Gastrocnemius medialis (tissue), 4 donors: ENCODE measurements at regions of chr6 and their contacts with region 1.

Region 1: DNA sequence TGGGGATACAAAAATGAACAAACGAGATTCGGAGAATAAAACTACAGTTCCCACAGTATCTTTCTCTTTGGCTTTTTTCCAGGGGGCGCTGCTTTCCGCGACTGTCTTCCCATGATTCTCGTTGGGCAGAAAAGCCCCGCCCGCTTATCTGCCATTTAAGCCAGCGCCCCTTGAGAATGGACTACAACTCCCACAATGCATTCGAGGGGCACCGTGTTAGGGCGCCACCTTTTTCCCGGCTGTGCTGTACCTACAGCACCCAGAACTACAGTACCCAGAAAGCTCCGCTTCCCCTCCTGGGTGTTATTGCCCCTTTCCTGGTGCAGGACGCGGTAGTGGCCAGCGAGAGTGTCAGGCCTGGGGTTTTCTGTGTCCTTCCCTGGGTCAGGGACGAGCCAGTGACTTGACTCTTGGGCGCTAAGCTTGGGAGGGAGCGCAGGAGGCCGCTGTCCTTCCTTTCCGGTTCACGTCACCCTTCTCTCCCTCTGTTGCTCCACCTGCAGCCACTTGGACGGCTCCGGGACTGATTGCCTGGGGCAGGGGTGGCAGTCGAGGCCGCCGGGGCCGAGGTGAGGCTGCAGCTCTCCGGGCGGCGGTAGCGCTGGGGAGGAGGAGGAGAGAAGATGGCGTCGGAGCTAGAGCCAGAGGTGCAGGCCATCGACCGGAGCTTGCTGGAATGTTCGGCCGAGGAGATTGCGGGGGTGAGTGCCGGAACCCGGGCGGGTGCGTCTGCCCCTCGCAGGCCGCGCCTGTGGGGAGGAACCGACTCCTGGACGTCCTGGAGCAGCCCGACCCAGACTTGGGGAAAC is at the start of gene UBR2:
- DNase-seq: peak; percentile 98 to 99
- ATAC-seq: peak; percentile 96 to 97
- H3K4me3 ChIP-seq: peak within 1 kb of the TSS; percentile 73 to 98 (median 81)
- H3K27ac ChIP-seq: peak within 1 kb of the TSS; percentile 91 to 97 (median 95)
- H3K4me1 ChIP-seq: peaks cover 22 to 26% of the 10 kb centered on the region in 2 donors
- H3K27me3 ChIP-seq: no peaks in the 10 kb centered on the region
- CTCF ChIP-seq: peak in 3 of 5 experiments; percentile 22 to 48 (median 31)
- POLR2A ChIP-seq: peak; percentile 94 to 96
- total RNA-seq, gene UBR2: 40.8 to 46.2 (median 44.7) TPM

Region 2: GRCh38 chr6:41920921-41921711 is 642.8 kb before region 1 on chr6 and contains the starts of genes BYSL and MED20:
- in situ Hi-C with region 1: loop called in 1 of 4 experiments (anchors 25 kb)
- intact Hi-C with region 1: loop called (anchors 10 kb)
- DNase-seq: peak; percentile 88 to 89
- ATAC-seq: peak; percentile 98 to 99
- H3K4me3 ChIP-seq: peak within 1 kb of the TSS; percentile 75 to 97 (median 86)
- H3K27ac ChIP-seq: peak within 1 kb of the TSS; percentile 93 to 98 (median 96)
- H3K4me1 ChIP-seq: peaks cover 29 to 30% of the 10 kb centered on the region in 2 donors
- H3K27me3 ChIP-seq: no peaks in the 10 kb centered on the region
- CTCF ChIP-seq: peak; percentile 98 to 100 (median 98)
- POLR2A ChIP-seq: peak; percentile 71 to 85
- total RNA-seq, gene BYSL: 8.0 to 16.6 (median 12.9) TPM
- total RNA-seq, gene MED20: 11.5 to 16.5 (median 12.1) TPM

Region 3: GRCh38 chr6:42050266-42051032 is 513.5 kb before region 1 on chr6 and contains the start of gene TAF8:
- in situ Hi-C with region 1: no loop called
- intact Hi-C with region 1: loop called (anchors 5 kb)
- DNase-seq: peak; percentile 91
- ATAC-seq: peak; percentile 90 to 92
- H3K4me3 ChIP-seq: peak within 1 kb of the TSS; percentile 67 to 78 (median 71)
- H3K27ac ChIP-seq: peak within 1 kb of the TSS; percentile 89 to 94 (median 92)
- H3K4me1 ChIP-seq: peaks cover 16 to 29% of the 10 kb centered on the region in 2 donors
- H3K27me3 ChIP-seq: peaks cover 0 to 19% (median 0%) of the 10 kb centered on the region in 3 donors
- CTCF ChIP-seq: no peak
- POLR2A ChIP-seq: peak; percentile 75 to 82
- total RNA-seq, gene TAF8: 16.3 to 49.2 (median 35.6) TPM

Region 4: GRCh38 chr6:42498473-42499128 is 65.3 kb before region 1 on chr6:
- in situ Hi-C with region 1: no loop called
- intact Hi-C with region 1: no loop called
- DNase-seq: no peak
- ATAC-seq: no peak
- H3K4me3 ChIP-seq: no peak overlapping the region
- H3K27ac ChIP-seq: no peak overlapping the region
- H3K4me1 ChIP-seq: no peaks in the 10 kb centered on the region
- H3K27me3 ChIP-seq: no peaks in the 10 kb centered on the region
- CTCF ChIP-seq: no peak
- POLR2A ChIP-seq: no peak

Region 5: DNA sequence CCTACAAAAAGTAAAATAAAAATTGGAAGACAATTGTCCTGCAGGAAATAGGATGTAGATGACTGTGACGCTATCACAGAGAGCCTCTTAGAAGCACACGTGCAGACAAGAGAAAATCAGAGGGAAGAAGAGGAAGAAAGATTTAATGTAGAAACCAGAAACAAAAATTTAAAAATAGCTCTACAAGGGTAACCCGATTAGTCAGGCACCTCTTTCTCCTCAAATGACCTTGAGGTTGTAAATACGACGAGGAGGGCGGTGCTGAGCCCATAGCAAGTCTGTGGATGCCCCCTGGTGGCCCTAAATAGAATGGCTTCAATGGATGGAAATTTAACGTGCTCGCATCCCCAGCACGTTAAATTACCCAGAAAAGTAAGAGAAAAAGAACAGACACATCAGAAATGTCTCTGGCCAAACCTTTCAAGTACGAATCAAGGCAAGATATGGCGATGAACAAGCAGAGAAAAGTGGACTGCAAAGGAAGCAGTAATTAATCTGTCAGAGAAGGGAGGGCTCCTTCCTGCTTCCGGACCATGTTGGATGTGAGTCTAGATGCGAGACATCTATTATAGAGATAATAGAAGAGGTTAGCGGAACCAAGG is 162.7 kb after region 1 on chr6:
- in situ Hi-C with region 1: no loop called
- intact Hi-C with region 1: loop called (anchors 2 kb)
- DNase-seq: peak; percentile 79 to 84
- ATAC-seq: peak; percentile 94 to 98
- H3K4me3 ChIP-seq: peak overlapping the region; percentile 55 to 74 (median 60)
- H3K27ac ChIP-seq: peak overlapping the region; percentile 72 to 86 (median 74)
- H3K4me1 ChIP-seq: peaks cover 13 to 27% of the 10 kb centered on the region in 2 donors
- H3K27me3 ChIP-seq: no peaks in the 10 kb centered on the region
- CTCF ChIP-seq: peak; percentile 90 to 98 (median 95)
- POLR2A ChIP-seq: no peak

Region 6: DNA sequence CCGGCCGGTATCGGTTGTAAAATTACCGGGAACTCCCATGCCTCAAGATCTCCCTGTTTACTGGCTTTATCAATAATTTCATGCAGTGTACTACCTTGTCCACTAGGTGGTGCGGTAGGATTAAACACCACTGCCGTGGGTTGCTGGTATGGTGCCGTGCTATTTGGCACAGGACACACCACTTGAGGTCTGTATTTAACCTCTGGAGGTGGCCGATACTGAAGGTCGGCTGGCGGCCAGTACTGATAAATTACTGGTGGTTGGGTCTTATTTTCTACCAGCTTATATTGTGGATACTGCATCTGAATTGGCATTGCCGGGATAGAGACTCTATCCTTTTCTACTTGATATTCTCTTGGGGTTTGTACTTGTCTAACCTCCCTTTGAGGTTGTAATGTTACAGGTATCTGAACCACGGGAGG is 337.6 kb after region 1 on chr6:
- in situ Hi-C with region 1: no loop called
- intact Hi-C with region 1: loop called (anchors 5 kb)
- DNase-seq: peak; percentile 60 to 76
- ATAC-seq: peak; percentile 92 to 99
- H3K4me3 ChIP-seq: no peak overlapping the region
- H3K27ac ChIP-seq: no peak overlapping the region
- H3K4me1 ChIP-seq: peaks cover 20 to 27% of the 10 kb centered on the region in 2 donors
- H3K27me3 ChIP-seq: no peaks in the 10 kb centered on the region
- CTCF ChIP-seq: peak; percentile 85 to 93 (median 90)
- POLR2A ChIP-seq: no peak

Region 7: DNA sequence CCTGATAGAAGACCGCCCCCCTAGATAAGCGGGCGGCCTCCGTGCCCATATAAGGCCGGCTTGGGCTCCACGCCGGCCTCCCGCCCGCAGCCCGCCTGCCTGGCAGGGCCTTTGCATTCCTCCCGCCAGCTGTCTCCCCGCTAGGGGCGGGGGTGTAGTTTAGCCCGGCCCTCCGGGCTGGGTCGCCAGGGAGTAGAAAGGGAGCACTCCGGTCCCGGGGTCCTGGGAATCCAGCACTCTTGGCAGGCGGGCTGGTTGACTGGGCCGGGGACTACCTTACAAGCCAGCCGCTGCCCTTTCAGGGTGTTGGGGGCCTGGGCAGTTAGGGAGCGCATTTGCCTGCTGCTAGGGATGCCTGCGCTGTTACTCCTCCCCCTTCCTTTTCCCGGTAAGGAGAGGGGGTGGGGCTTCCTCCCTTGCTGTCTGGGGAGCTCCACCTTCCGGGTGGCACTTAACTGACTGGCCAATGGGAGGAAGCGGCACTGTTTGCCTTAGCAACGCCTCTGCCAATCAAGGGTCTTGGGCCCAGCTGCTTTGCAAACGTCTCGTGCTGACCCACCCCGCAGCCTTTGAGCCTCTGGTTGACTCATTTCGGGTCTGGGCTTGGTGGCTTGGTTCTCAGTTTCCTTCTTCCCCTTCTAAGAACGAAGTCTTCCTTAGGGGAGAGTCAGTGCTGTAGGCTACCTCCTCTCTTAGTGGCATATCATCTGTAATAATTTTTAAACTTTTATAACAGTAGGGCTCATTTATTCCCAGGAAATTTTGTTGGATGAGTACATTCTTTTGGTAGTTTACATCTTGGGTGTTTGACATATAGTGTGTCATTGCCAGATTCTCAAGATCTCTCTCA is 610.6 kb after region 1 on chr6:
- in situ Hi-C with region 1: no loop called
- intact Hi-C with region 1: loop called (anchors 5 kb)
- DNase-seq: peak; percentile 99
- ATAC-seq: peak; percentile 77 to 79
- H3K4me3 ChIP-seq: peak overlapping the region; percentile 51 to 88 (median 65)
- H3K27ac ChIP-seq: peak overlapping the region; percentile 89 to 98 (median 92)
- H3K4me1 ChIP-seq: peaks cover 30 to 41% of the 10 kb centered on the region in 2 donors
- H3K27me3 ChIP-seq: no peaks in the 10 kb centered on the region
- CTCF ChIP-seq: peak in 3 of 5 experiments; percentile 28 to 48 (median 36)
- POLR2A ChIP-seq: peak; percentile 64 to 82